Activated CD8-positive, alpha-beta T cell treated with anti-CD3 and anti-CD28 coated beads for 36 hours (primary cell): ENCODE measurements at regions of chrX and their contacts with region 1.

Region 1: DNA sequence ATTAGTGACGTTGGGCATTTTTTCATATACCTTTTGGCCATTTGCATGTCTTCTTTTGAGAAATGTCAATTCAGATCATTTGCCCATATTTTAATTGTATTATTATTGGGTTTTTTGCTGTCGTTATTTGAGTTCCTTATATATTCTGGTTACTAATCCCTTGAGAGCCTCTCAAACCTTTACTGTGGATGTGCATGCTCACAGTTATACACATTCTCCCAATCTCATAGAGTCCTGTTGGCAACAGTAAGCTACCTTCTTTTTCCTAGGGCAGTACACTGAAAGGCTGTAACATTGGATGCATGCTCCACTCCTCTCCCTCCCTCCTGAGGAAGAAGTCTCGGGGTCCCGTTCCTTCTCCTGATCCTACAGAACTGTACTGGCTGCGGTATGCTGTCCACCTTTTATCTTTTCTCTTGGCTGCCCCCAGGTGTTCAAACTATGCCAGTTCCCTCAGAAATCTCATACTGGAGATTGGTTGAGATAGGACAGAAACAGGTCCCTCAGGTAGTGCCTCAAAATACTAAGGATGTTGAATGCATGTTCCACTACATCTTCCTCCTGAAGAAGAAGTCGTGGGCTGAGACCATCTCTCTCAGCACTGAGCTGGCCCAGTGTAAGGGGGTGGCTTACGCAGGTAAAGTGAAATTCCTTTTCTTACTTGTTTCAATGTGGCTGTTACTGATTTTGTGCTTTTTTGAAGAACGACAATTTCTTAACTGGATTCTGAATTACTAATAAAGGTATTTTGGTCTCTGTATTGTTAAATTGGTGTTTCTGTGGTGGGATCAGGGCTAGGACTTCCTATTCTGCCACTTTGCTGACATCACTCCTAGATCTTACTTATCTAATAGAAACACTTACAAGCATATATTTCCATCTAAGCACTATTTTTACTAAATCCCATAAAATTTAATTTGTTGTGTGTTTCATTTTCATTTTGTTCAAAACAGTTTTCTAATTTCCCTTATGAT is 145.4 kb upstream of the HUWE1 start:
- DNase-seq: peak; percentile 64
- ATAC-seq: peak; percentile 89
- H3K4me3 Mint-ChIP-seq: peak overlapping the region; percentile 8
- H3K27ac Mint-ChIP-seq: peak overlapping the region; percentile 46
- H3K4me1 Mint-ChIP-seq: peaks cover 15% of the 10 kb centered on the region
- H3K27me3 Mint-ChIP-seq: no peaks in the 10 kb centered on the region
- CTCF ChIP-seq: peak; percentile 54

Region 2: DNA sequence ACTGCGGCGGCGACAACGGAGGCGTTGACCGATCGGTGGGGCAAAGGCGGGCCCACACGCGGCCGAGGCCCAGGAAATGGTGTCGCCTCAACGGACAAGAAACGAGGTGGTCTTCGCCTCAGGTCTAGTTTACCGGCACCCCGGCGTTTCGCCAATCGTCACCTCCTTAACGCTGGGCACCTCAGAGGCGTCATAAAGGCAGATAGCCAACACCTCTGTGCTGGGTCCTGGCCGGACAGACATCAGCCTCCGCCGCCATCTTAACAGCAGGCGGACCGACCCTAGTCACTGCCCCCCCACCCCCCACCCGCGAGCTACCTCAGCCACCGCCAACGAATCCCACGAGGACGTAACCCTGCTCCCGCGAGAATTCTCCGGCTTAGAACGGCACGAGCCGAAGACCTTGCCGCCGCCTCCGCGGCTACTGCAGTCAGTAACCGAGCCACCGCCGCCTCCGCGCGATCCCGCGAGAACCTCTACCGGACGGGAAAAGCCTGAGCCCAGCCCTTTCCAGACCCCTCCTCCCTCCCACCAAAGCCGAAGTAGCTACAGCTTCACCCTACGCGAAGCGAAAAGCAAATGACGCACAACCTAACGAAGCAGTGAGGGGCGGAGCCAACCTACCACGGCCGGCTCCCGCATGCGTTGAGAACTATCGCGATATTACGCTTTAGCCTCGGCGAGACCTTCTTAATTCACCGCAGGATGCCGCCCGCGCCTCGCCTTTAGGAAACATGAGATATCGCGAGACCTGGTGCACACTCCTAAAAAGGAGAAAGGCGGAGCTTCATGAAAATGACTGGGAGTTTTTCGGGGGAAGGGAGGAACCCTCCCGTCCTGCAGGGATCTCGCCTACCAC is 148.2 kb before region 1 on chrX:
- CTCF ChIA-PET with region 1: interaction called, 4 read pairs
- POLR2A ChIA-PET with region 1: no interaction called
- intact Hi-C with region 1: loop called (anchors 5 kb)
- DNase-seq: peak; percentile 95
- ATAC-seq: peak; percentile 78
- H3K4me3 Mint-ChIP-seq: peak overlapping the region; percentile 94
- H3K27ac Mint-ChIP-seq: peak overlapping the region; percentile 94
- H3K4me1 Mint-ChIP-seq: peaks cover 29% of the 10 kb centered on the region
- H3K27me3 Mint-ChIP-seq: no peaks in the 10 kb centered on the region
- CTCF ChIP-seq: no peak

Region 3: DNA sequence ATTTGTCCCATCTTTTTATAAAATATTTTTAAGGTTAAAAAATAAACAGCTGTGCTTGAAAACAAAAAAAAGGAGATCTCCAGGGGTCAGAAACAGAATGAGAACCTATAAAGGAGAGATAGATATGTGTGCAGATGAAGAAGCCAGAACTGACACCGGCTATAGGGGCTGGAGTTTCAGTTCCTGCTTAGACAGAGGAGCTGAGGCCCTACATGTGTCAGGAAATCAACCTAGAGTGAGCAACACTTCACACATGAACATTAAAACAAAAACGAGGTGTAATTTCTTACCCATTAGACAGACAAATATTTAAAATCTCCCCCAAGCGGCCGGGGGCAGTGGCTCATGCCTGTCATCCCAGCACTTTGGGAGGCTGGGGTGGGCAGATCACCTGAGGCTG is 127.7 kb before region 1 on chrX:
- CTCF ChIA-PET with region 1: no interaction called
- POLR2A ChIA-PET with region 1: no interaction called
- intact Hi-C with region 1: no loop called
- DNase-seq: no peak
- ATAC-seq: no peak
- H3K4me3 Mint-ChIP-seq: no peak overlapping the region
- H3K27ac Mint-ChIP-seq: no peak overlapping the region
- H3K4me1 Mint-ChIP-seq: peaks cover 6% of the 10 kb centered on the region
- H3K27me3 Mint-ChIP-seq: no peaks in the 10 kb centered on the region
- CTCF ChIP-seq: no peak